ENCODE measurements at regions of chr6 and their contacts with region 1.

Region 1: GRCh38 chr6:163329991-163330390 is 84.5 kb upstream of the QKI start:
- DNase-seq: no peak
- H3K4me3 ChIP-seq: no peak overlapping the region
- H3K27ac ChIP-seq: no peak overlapping the region
- H3K4me1 ChIP-seq: no peaks in the 10 kb centered on the region
- H3K27me3 ChIP-seq: no peaks in the 10 kb centered on the region
- CTCF ChIP-seq: no peak
- EP300 ChIP-seq: no peak
- POLR2A ChIP-seq: no peak

Region 2: DNA sequence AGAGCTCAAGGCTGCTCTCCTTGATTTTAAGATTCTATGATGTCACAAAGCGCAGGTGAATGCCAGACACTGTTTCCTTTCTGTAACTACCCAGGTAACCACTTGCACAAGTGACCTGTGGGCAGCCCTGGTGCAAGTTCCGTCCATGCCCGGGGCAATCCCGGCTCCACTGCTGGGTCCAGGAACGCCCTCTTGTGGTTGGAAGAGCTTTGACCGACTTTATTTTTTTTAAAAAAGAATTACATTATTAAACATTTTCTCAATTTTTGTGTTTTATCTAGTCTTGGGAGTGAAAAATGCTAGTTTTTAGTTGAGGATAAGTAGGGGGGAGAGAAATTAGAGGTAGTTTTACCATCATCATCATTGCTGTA is 779.8 kb after region 1 on chr6:
- intact Hi-C with region 1: loop called in 1 of 4 experiments (anchors 5 kb)
- DNase-seq: no peak
- H3K4me3 ChIP-seq: no peak overlapping the region
- H3K27ac ChIP-seq: no peak overlapping the region
- H3K4me1 ChIP-seq: no peaks in the 10 kb centered on the region
- H3K27me3 ChIP-seq: no peaks in the 10 kb centered on the region
- CTCF ChIP-seq: no peak
- EP300 ChIP-seq: no peak
- POLR2A ChIP-seq: no peak